ENCODE measurements at regions of chr10 and their contacts with region 1.

Region 1: DNA sequence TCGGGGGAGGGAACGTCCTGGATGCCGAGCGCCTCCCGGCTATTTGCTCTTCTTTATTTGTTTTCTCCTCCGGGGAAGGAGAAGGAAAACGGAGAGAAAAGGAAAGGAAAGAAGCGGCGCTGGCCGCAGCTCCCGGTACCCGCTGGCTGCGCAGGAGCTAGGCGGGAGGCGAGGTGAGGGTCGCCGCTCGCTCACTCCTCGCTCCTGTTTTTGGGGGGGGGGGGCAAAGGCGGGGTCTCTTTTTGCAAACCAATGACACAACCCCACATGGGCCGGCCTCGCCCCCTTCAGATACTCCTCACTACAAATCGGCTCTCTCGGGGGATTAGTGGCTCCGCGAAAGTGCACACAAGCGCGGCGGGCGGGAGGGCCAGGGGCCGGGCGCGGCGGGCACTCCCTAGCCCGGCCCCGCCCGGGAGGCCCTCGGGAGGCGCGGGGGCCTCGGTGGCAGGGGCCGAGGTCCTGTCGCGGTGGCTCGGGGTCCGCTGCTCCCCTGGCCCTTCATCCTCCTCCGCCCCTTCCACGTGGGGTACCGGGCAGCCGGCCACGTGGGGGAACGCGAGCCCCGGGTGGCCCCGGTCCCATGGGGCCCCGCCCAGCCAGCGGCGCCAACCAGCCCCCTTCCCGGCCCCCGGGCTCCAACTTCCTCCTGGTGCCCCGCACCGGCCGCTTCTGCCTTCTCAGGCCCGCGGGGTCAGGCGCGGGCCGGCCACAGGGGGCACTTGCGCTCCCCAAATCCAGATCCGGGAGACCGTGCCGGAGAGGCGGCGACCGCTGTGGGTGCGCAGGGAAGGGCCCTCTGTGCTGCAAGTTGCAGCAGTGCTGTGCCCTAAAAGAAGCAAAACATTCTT is 718 bp upstream of the CTBP2 start:
- H3K4me3 Mint-ChIP-seq: peak overlapping the region; percentile 87
- H3K27ac Mint-ChIP-seq: peak overlapping the region; percentile 89
- H3K4me1 Mint-ChIP-seq: peaks cover 14% of the 10 kb centered on the region
- H3K27me3 Mint-ChIP-seq: peaks cover 19% of the 10 kb centered on the region

Region 2: GRCh38 chr10:124916585-124917427 is 244.3 kb before region 1 on chr10:
- intact Hi-C with region 1: loop called (anchors 10 kb)
- H3K4me3 Mint-ChIP-seq: peak overlapping the region; percentile 76
- H3K27ac Mint-ChIP-seq: peak overlapping the region; percentile 91
- H3K4me1 Mint-ChIP-seq: peaks cover 54% of the 10 kb centered on the region
- H3K27me3 Mint-ChIP-seq: no peaks in the 10 kb centered on the region

Region 3: DNA sequence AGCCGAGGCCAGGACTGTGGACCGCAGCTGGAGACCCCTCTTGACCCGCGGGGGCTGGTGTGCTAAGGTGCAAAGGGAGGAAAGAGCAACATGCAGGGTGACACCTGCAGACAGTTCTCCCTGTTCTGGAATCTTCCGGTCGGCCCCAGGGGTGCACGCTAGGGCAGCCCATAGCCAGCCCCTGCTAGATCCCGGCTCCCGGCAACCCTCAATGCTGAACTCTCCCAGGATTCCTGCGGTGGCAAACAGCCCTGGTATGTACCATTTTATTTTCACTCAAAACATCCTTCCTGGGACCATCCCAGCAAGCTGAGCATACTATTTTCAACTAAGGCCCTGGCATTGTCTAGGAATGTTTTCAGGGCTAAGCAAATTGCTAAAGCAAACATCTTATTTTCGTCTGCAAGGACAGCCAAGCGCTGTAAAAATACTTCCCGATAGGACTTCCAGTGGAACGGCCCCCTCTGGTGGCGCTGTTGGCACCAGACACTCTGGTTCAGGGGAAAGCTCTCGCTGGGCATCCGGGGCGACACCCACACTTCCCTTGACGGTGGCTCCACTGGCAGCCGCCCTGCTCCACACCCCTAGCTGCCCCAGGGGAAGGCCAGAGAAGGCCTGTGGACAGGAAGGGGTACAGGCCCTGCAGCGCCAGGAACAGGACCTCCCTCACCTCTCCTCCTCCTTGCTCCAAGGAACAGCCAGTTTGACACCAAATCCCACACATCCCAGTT is 100.1 kb before region 1 on chr10:
- intact Hi-C with region 1: loop called (anchors 5 kb)
- H3K4me3 Mint-ChIP-seq: no peak overlapping the region
- H3K27ac Mint-ChIP-seq: peak overlapping the region; percentile 75
- H3K4me1 Mint-ChIP-seq: peaks cover 91% of the 10 kb centered on the region
- H3K27me3 Mint-ChIP-seq: no peaks in the 10 kb centered on the region

Region 4: DNA sequence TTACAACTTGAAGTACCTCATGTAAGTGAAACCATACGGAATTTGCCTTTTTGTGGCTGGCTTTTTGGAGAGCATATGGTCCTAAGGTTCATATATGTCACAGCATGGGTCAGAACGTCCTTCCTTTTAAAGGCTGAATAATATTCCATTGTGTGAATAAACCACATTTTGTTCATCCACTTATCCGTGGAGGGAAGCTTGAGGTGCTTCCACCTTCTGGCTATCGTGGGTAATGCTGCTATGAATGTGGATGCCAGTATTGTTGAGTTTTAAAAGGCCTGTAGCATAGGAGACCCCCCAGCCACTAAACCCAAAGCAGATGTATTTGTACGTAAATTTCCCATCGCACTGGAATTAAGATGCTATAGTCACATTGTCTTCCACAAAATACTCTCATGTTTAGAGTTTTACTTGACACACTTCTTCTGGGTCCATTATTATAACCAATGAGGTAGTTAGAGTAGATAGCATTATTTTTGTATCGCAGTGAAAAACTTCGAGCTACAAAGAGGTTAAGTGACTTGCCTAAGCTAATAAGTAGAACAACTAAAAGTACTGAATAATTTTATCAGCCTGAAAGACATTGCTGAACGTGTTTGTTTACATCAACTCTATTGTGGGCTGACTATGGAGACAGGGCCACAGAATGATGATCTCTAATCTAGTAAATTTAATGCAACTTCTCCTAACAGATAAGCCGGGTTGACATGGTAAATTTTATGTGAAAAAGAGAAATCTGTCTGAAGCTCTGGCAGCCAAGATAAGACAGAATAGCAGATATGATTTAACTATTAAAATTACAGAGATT is 182.2 kb after region 1 on chr10:
- intact Hi-C with region 1: loop called (anchors 10 kb)
- H3K4me3 Mint-ChIP-seq: no peak overlapping the region
- H3K27ac Mint-ChIP-seq: no peak overlapping the region
- H3K4me1 Mint-ChIP-seq: no peaks in the 10 kb centered on the region
- H3K27me3 Mint-ChIP-seq: peaks cover 6% of the 10 kb centered on the region

Region 5: GRCh38 chr10:125822878-125823662 is 662.0 kb after region 1 on chr10 and contains the starts of genes BCCIP and UROS:
- intact Hi-C with region 1: loop called (anchors 5 kb)
- H3K4me3 Mint-ChIP-seq: no peak within 1 kb of the TSS
- H3K27ac Mint-ChIP-seq: no peak within 1 kb of the TSS
- H3K4me1 Mint-ChIP-seq: peaks cover 23% of the 10 kb centered on the region
- H3K27me3 Mint-ChIP-seq: no peaks in the 10 kb centered on the region

Measured in dendritic cell treated with granulocyte-macrophage colony-stimulating factor and Interleukin-4, amounts not matched to agents 40 ng/mL and 50 ng/mL, for 4 days (primary cell).